Heart left ventricle (tissue), 16 donors: ENCODE measurements at regions of chr7 and their contacts with region 1.

Region 1: GRCh38 chr7:43042302-43042701 is 70.1 kb upstream of the HECW1 start:
- DNase-seq: no peak
- ATAC-seq: no peak
- H3K4me3 ChIP-seq: no peak overlapping the region
- H3K27ac ChIP-seq: no peak overlapping the region
- H3K4me1 ChIP-seq: no peaks in the 10 kb centered on the region
- H3K27me3 ChIP-seq: peaks cover 0 to 2% (median 0%) of the 10 kb centered on the region in 9 donors
- CTCF ChIP-seq: no peak
- POLR2A ChIP-seq: no peak

Region 2: DNA sequence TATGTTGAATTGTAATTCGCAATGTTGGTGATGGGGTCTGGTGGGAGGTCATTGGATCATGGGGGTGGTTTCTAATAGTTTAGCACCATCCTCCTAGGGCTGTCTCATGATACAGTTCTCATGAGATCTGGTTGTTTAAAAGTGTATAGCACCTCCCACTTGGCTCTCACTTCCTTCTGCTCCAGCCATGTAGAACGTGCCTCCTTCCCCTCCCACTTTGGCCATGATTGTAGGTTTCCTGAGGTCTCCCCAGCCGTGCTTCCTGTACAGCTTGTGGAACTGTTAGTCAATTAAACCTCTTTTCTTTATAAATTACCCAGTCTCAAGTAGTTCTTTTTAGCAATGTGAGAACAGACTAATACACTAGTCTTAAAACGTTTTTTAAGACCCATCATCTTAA is 54.6 kb after region 1 on chr7:
- intact Hi-C with region 1: loop called in 1 of 10 experiments (anchors 10 kb)
- DNase-seq: no peak
- ATAC-seq: no peak
- H3K4me3 ChIP-seq: no peak overlapping the region
- H3K27ac ChIP-seq: no peak overlapping the region
- H3K4me1 ChIP-seq: no peaks in the 10 kb centered on the region
- H3K27me3 ChIP-seq: peaks cover 0 to 6% (median 0%) of the 10 kb centered on the region in 9 donors
- CTCF ChIP-seq: no peak
- POLR2A ChIP-seq: no peak